ENCODE measurements at regions of chr1 and their contacts with region 1.

Region 1: GRCh38 chr1:111399792-111400610 is 27.5 kb downstream of the OVGP1 start:
- DNase-seq: peak; percentile 59 to 77
- H3K4me3 ChIP-seq: no peak overlapping the region
- H3K4me1 ChIP-seq: peaks cover 8% of the 10 kb centered on the region
- H3K27me3 ChIP-seq: 0 out of 2 replicates have a peak, but pooled peaks cover 3% of the 10 kb centered on the region

Region 2: DNA sequence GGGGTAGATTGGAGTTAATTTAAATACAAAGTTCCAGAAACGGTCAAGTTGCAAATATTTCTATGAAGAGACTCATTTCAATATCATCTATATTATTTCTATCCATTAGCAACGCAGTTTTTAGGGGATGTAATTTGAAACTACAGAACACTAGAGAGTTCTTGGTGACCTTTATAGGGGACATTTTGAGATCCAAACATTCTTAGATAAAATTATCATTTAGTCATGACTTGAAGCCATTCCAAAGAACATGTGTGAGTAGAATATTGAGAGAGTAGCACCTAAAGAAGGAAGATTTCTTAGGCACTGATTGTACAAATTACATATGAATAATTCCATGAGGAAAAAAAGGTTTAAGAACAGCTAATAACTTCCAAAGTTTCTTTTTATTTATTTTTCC is 90.3 kb before region 1 on chr1:
- in situ Hi-C with region 1: no loop called
- DNase-seq: no peak
- H3K4me3 ChIP-seq: no peak overlapping the region
- H3K4me1 ChIP-seq: peaks cover 19% of the 10 kb centered on the region
- H3K27me3 ChIP-seq: no peaks in the 10 kb centered on the region; the same call in 1 of the 2 replicates

Region 3: DNA sequence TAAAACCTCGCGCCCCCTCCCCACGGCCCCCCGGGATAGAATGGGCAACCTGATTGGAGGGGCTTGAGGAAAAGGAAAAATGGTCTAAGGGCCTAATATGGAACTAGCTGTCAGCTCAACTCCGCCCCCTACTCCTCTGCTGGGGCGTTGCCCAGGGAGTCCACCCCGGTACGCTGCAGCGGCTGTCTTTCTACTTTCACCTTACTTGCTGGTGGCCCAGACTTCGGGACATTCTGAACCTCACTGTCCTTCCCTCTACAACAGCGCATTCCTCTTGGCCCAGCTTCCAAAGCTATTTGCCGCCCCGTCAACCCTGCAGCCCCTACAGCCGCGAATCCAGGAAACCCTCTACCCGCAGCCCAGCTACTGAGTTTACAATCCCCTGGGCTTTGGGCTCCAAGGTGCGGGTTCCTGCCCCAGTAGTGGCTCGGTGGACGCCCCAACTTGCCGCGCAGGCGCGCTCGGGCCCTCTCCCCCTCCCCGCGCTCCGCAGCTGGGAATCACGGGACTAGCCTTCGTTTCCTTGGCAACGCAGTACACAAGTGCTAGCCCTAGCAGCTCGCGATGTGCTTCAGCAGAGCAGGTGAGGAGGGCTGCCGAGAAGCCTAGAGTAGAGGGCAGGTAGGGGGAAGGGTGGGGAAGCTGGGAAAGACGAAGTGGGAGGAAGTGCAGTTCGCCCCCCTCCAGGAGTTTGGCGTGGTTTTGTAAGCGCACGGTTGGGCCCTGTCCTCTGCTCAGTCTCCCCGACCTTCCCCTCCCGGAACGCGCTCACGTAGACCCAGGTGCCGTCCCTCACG is 53.7 kb before region 1 on chr1:
- in situ Hi-C with region 1: loop called (anchors 10 kb)
- DNase-seq: peak; percentile 85 to 92
- H3K4me3 ChIP-seq: peak overlapping the region; percentile 42
- H3K4me1 ChIP-seq: peaks cover 10% of the 10 kb centered on the region
- H3K27me3 ChIP-seq: no peaks in the 10 kb centered on the region